Astrocyte of the cerebellum (primary cell): ENCODE measurements at regions of chr5 and their contacts with region 1.

Region 1: DNA sequence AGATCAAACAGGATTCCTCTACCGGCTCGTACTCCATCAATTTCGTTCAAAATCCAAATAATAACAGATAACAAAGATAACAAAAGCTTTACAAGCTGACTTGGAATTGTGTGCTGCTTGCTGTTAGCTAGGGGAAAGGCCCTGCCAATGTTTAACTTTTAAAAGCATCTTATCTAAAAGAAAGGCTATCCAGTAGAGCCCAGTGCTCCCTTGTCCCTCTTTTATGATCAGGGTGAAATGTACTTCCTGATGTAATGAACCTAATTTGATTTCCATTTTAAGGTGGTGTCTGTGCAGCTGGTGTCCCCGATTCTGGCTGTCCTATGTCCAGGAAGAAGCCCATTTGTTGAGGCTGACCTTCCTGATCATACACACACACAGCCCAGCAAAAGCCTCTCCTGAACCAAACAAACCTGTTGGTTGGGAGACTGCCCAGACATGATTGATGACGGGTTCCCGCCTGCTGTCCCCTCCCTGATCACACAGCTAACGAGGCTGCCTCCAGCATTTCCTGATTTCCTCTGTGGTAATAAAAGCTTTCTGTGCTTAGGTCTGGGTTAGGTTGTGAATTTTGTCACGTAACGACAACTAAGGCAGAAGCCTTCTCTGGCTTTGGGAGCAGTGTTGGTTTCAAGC is 54.1 kb downstream of the PWWP2A start:
- DNase-seq: no peak
- H3K4me3 ChIP-seq: no peak overlapping the region
- CTCF ChIP-seq: no peak

Region 2: DNA sequence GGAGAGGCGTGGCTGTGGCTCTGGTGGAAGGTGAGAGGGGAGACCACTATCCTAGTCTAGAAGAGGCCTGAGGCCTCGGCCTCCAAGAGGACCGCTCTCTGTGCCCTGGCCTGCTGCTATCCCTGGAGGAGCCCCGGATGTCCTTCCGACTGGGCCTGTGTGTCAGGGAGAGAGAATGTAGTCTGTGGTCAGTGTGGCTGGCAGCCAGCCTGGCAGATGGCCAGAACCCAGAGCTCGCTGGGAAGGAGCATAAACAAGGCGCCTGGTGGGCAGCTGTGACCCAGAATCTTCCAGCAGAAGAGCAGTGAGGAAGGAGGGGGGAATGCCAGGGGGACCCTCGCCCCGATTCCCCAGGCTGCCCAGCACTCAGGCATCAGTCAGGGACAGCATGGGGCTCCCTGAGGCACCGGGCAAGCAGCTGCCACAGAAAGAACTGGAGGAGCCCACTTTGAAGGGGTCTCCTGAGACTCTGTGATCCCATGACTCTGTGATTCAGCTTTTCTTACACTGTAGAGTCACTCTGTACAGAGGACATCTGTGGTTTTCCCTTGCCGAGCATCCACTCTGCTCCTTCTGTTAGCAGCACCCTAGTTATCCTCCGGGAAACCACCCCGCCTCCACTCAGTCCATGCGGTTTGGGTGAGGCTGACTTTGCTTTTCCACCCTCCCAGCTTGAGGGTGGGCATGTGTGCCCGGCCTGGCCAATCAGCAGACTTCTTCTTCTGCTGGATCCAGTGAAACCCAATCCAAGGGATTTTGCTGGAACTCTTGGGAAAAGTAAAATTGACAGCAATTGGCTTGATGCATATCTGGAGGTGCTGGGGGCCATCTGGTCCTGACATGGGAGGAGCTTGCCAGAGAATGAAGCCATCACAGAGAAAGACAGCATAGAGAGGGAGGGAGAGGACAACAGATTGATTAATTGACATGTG is 100.3 kb after region 1 on chr5:
- in situ Hi-C with region 1: loop called (anchors 5 kb)
- DNase-seq: peak; percentile 92
- H3K4me3 ChIP-seq: no peak overlapping the region
- CTCF ChIP-seq: no peak